Caco-2 (cell line): ENCODE measurements at regions of chr7 and their contacts with region 1.

Region 1: GRCh38 chr7:24587848-24588247 is 14.6 kb downstream of the PALS2 start:
- DNase-seq: peak; percentile 59 to 72
- H3K4me3 ChIP-seq: no peak overlapping the region
- H3K4me3 Mint-ChIP-seq: no peak overlapping the region
- H3K27ac Mint-ChIP-seq: no peak overlapping the region
- H3K4me1 ChIP-seq: peaks cover 8% of the 10 kb centered on the region
- H3K4me1 Mint-ChIP-seq: peaks cover 7% of the 10 kb centered on the region
- H3K27me3 ChIP-seq: no peaks in the 10 kb centered on the region
- H3K27me3 Mint-ChIP-seq: no peaks in the 10 kb centered on the region
- CTCF ChIP-seq: peak; percentile 77 to 80

Region 2: DNA sequence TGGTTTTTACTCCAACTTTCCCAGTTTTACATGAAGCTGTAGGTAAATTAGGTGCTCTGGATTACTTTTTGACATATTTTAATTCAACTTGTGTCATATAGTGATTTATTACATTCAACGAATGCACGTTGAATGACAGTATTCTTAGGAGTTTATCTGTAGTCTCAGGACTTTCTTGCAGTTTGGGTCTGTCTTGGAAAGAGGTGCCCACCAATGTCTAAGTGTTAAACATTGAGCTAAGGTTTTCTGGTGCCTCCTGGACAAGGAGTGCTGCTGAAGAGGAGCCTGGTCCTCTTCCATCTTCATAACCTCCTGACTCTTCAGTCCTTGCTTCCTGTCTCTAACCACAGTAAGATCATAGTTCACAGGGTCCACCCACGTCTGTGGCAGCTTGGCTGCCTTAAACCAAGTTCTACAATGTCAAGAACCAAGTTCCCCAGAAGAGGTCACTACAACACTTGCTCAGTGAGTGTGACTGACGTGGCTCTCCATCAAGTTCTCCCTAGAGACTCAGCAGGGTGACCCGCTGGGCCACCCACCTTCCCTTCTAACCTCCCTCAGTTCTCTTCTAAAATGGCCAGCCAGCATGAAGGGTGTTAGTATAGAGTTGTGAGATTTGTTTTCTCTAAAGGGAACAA is 297.7 kb before region 1 on chr7:
- CTCF ChIA-PET with region 1: no interaction called
- POLR2A ChIA-PET with region 1: no interaction called
- intact Hi-C with region 1: loop called (anchors 1 kb)
- DNase-seq: peak; percentile 62 to 66
- H3K4me3 ChIP-seq: no peak overlapping the region
- H3K4me3 Mint-ChIP-seq: no peak overlapping the region
- H3K27ac Mint-ChIP-seq: no peak overlapping the region
- H3K4me1 ChIP-seq: no peaks in the 10 kb centered on the region
- H3K4me1 Mint-ChIP-seq: peaks cover 8% of the 10 kb centered on the region
- H3K27me3 ChIP-seq: no peaks in the 10 kb centered on the region; the same call in 1 of the 2 replicates
- H3K27me3 Mint-ChIP-seq: peaks cover 17% of the 10 kb centered on the region
- CTCF ChIP-seq: peak; percentile 60 to 68

Region 3: GRCh38 chr7:24318326-24318725 is 269.5 kb before region 1 on chr7:
- CTCF ChIA-PET with region 1: interaction called, 3 read pairs
- POLR2A ChIA-PET with region 1: no interaction called
- intact Hi-C with region 1: loop called (anchors 1 kb)
- DNase-seq: peak; percentile 41 to 45
- H3K4me3 ChIP-seq: no peak overlapping the region
- H3K4me3 Mint-ChIP-seq: no peak overlapping the region
- H3K27ac Mint-ChIP-seq: no peak overlapping the region
- H3K4me1 ChIP-seq: no peaks in the 10 kb centered on the region
- H3K4me1 Mint-ChIP-seq: no peaks in the 10 kb centered on the region
- H3K27me3 ChIP-seq: no peaks in the 10 kb centered on the region
- H3K27me3 Mint-ChIP-seq: peaks cover 24% of the 10 kb centered on the region
- CTCF ChIP-seq: peak; percentile 40 to 77

Region 4: GRCh38 chr7:24381894-24382505 is 205.8 kb before region 1 on chr7:
- CTCF ChIA-PET with region 1: no interaction called
- POLR2A ChIA-PET with region 1: no interaction called
- intact Hi-C with region 1: loop called (anchors 5 kb)
- DNase-seq: peak in 1 of 2 experiments; percentile 19
- H3K4me3 ChIP-seq: no peak overlapping the region
- H3K4me3 Mint-ChIP-seq: no peak overlapping the region
- H3K27ac Mint-ChIP-seq: no peak overlapping the region
- H3K4me1 ChIP-seq: no peaks in the 10 kb centered on the region
- H3K4me1 Mint-ChIP-seq: no peaks in the 10 kb centered on the region
- H3K27me3 ChIP-seq: no peaks in the 10 kb centered on the region
- H3K27me3 Mint-ChIP-seq: peaks cover 2% of the 10 kb centered on the region
- CTCF ChIP-seq: peak; percentile 60 to 65

Region 5: GRCh38 chr7:24401628-24402593 is 185.9 kb before region 1 on chr7:
- CTCF ChIA-PET with region 1: no interaction called
- POLR2A ChIA-PET with region 1: no interaction called
- intact Hi-C with region 1: loop called (anchors 1 kb)
- DNase-seq: peak in 1 of 2 experiments; percentile 20
- H3K4me3 ChIP-seq: no peak overlapping the region
- H3K4me3 Mint-ChIP-seq: no peak overlapping the region
- H3K27ac Mint-ChIP-seq: no peak overlapping the region
- H3K4me1 ChIP-seq: peaks cover 11% of the 10 kb centered on the region; the same call in 1 of the 2 replicates
- H3K4me1 Mint-ChIP-seq: peaks cover 6% of the 10 kb centered on the region
- H3K27me3 ChIP-seq: no peaks in the 10 kb centered on the region
- H3K27me3 Mint-ChIP-seq: no peaks in the 10 kb centered on the region
- CTCF ChIP-seq: peak; percentile 32 to 37

Region 6: DNA sequence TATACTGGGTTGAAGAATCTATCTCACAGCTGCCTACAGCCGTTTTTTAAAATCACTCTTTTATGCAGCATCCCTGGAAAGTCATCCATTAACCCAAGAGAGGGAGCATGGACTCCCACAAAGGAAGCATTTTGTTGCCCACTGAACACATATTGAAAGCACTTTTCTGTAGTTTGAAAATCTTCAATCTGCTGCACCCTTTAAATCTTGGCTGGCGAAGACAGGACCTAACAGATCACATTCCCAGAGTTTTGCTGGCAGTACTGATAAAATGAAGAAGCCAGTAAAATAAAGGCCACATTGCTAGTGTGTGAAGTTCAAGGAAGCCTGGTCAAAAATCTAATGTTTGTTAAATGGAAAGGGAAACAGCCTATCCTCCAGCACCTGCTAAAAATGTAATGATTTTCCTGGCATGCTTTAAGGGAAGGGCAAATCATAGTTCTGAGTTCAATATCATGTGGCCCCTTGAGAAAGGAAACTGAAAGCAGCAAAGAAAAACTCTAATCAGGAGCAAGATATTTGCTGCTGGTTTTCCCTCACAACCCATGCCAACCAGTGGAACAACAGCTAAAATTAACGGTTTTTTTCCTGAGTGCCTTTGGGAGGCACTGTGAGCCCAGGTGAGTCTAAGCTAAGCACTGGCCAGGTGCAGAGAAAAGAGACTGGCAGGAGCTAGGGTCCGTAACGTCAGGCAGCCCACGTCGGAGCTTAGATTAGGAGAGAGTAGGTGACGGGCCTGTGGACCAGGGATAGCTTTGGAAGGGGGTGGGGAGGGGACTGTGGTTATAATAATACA is 112.5 kb before region 1 on chr7:
- CTCF ChIA-PET with region 1: no interaction called
- POLR2A ChIA-PET with region 1: no interaction called
- intact Hi-C with region 1: loop called (anchors 2 kb)
- DNase-seq: no peak
- H3K4me3 ChIP-seq: no peak overlapping the region
- H3K4me3 Mint-ChIP-seq: no peak overlapping the region
- H3K27ac Mint-ChIP-seq: no peak overlapping the region
- H3K4me1 ChIP-seq: peaks cover 31% of the 10 kb centered on the region
- H3K4me1 Mint-ChIP-seq: peaks cover 12% of the 10 kb centered on the region
- H3K27me3 ChIP-seq: no peaks in the 10 kb centered on the region
- H3K27me3 Mint-ChIP-seq: no peaks in the 10 kb centered on the region
- CTCF ChIP-seq: no peak

Region 7: GRCh38 chr7:24572997-24573625 is 14.7 kb before region 1 on chr7 and contains the start of gene PALS2:
- CTCF ChIA-PET with region 1: interaction called, 3 read pairs
- POLR2A ChIA-PET with region 1: no interaction called
- intact Hi-C with region 1: loop called (anchors 1 kb)
- DNase-seq: peak; percentile 75 to 81
- H3K4me3 ChIP-seq: peak within 1 kb of the TSS; percentile 81
- H3K4me3 Mint-ChIP-seq: peak within 1 kb of the TSS; percentile 98
- H3K27ac Mint-ChIP-seq: peak within 1 kb of the TSS; percentile 69
- H3K4me1 ChIP-seq: peaks cover 31% of the 10 kb centered on the region
- H3K4me1 Mint-ChIP-seq: peaks cover 37% of the 10 kb centered on the region
- H3K27me3 ChIP-seq: no peaks in the 10 kb centered on the region
- H3K27me3 Mint-ChIP-seq: peaks cover 11% of the 10 kb centered on the region
- CTCF ChIP-seq: no peak
- total RNA-seq, gene PALS2: 37.2 and 38.5 TPM in 2 replicates